Panc1 (cell line): ENCODE measurements at regions of chr2 and their contacts with region 1.

Region 1: DNA sequence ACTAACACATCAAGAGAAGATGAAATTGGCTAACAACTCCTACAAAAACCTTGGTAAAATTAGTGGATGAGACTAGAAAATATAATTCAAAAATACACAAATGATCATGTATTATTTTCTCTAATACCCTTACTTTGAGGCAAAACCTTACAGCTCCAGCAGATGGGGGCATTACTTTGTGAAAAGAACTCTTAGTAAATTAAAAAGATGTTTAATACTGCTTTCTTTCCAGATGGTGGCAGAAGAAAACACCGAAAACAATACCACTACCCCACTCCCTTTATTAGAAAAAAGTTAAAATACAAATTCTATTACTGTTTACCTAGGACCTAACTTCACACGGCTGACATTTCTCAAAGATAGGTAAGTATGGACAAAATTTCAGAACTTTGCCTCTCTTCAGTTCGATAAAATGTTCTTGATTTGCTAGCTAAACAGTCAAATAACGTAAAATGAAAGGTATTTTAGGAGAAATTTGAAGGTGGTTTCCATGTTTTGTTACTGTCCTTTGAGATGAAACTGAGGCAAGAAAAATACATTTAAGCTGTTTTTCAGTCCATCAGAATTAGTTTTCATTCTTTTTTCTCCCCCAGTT is 30.6 kb downstream of the ORC4 start:
- DNase-seq: peak; percentile 28
- ATAC-seq: no peak
- H3K4me3 ChIP-seq: no peak overlapping the region
- H3K27ac ChIP-seq: no peak overlapping the region
- H3K4me1 ChIP-seq: no peaks in the 10 kb centered on the region
- H3K27me3 ChIP-seq: no peaks in the 10 kb centered on the region
- CTCF ChIP-seq: peak; percentile 64; the same call in 1 of the 2 replicates

Region 2: DNA sequence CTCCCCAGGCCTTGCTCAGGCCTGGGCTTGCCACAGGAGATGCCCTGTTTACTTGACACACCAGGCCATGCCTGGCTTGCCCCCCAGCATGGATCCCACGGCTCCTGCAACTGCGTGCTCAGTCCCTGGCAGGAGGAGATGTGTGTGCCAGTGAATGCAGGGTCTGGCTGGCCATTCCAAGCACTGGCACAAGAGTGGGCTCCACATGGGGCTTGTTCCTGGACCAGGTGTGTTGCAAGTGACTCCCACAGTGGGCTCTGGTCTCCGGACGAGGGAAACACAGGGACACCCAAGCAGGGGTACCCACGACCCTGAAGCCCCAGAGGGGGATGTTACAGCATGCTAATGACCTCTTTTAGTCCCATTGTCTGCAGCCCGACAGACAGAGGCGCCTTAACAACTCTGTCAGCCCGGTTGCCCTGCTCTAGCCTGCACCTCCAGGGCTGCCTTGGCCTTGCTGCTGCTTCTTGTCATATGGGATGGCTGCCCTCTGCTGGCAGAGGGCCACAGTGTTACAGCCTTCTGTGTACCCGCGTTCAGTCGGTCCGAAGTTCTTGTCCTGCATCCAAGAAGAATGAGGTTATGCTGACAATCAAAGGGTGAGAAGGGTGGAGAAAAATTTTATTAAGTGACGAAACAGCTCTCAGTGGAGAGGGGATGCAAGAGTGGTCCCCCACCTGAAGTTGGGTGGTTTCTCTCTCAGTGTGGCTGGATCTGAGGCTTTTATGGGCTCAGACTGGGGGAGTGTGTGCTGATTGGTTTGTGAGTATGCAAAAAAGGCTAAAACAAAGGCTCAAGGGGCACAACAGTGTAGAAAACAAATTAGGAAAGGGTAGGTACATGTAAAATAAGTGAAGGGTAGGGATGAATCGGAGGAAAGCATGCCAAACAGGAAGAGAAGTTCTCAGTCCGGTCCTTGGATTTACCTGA is 211.4 kb after region 1 on chr2:
- CTCF ChIA-PET with region 1: no interaction called
- POLR2A ChIA-PET with region 1: no interaction called
- in situ Hi-C with region 1: no loop called
- intact Hi-C with region 1: loop called (anchors 10 kb)
- DNase-seq: no peak
- ATAC-seq: peak; percentile 88
- H3K4me3 ChIP-seq: no peak overlapping the region
- H3K27ac ChIP-seq: no peak overlapping the region
- H3K4me1 ChIP-seq: no peaks in the 10 kb centered on the region
- H3K27me3 ChIP-seq: no peaks in the 10 kb centered on the region
- CTCF ChIP-seq: peak; percentile 63

Region 3: DNA sequence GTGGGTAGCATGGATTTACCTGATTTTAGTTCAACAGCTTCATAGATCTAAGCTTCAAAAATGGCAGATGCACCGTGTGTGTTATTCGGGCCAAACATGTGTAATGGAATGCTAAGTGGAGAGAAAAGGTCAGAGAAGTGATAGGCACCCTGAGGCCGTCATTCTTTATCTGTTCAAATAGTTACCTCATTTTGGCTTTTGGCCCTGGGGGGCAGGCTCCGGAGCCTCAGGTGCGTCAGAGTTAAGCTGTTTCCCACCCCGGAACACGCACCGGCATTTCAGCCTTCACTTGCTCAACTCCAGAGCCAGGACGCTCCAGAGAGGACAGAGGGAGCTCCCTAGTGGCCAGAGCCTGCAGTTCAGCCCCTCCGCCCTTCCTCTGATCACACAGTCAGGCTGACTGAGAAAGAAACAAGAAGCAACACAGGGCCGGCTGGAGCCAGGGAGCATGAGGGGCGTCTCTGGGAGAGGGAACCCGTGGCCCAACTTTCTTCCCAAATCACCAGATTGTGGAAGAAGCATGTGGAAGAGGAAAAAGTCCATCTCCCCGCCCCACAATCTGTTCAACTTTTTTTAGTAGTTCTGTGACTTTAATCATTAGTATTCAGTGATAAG is 519.5 kb after region 1 on chr2:
- CTCF ChIA-PET with region 1: interaction called, 3 read pairs
- POLR2A ChIA-PET with region 1: no interaction called
- in situ Hi-C with region 1: no loop called
- intact Hi-C with region 1: loop called (anchors 2 kb)
- DNase-seq: peak; percentile 73
- ATAC-seq: peak; percentile 100
- H3K4me3 ChIP-seq: peak overlapping the region; percentile 38 to 55
- H3K27ac ChIP-seq: no peak overlapping the region
- H3K4me1 ChIP-seq: peaks cover 3% of the 10 kb centered on the region
- H3K27me3 ChIP-seq: no peaks in the 10 kb centered on the region
- CTCF ChIP-seq: peak; percentile 96